ENCODE measurements at regions of chr17 and their contacts with region 1.

Region 1: DNA sequence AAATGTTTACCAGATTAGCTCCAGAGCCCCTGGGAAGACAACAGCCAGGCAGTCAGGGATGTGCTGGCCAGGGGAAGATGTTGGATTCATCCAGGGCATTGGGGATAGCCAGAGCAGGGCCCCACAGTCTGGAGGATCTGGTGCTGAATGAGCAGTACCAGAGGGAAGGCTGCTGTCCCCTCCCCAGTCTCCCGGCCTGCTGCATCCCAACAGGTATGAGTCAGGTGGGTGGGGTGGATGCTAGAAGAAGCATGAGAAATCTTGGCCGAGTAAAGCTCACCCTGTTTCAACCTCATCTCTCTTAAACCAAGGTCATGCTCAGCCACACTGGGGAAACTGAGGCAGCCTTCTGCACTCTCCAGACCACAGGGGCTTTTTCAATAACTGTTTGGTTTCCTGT is 71.9 kb upstream of the SEC14L1 start:
- DNase-seq: no peak
- H3K4me3 Mint-ChIP-seq: no peak overlapping the region
- H3K27ac Mint-ChIP-seq: no peak overlapping the region
- H3K4me1 Mint-ChIP-seq: peaks cover 1% of the 10 kb centered on the region
- H3K27me3 Mint-ChIP-seq: peaks cover 29% of the 10 kb centered on the region

Region 2: DNA sequence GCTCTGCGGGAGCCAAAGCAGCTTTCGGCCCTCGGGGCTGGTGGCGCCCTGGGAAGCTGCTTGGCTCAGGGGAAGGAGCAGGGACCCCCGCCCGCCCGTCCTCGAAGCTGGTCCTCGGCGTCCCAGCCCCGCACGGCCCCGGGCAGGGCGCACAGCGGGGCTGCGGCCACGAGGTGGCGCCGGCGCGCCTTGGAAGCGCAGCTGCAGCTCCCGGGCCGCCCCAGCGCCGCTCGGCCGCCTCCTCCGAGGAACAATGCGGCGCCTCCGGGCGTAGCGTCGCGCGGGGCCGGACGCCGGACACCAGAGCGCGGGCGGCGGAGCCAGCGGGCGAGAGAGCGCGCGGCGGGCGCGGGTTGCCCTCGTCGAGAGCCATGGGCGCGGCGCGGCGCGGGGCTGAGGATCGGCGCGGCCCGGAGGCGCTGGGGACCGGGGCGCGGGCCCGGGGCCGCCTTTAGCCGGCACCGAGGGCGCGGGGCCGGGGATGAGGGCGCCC is 200.7 kb before region 1 on chr17 and contains the start of gene MGAT5B:
- CTCF ChIA-PET with region 1: interaction called, 13 read pairs
- POLR2A ChIA-PET with region 1: no interaction called
- DNase-seq: peak; percentile 72
- H3K4me3 Mint-ChIP-seq: peak within 1 kb of the TSS; percentile 61
- H3K27ac Mint-ChIP-seq: no peak within 1 kb of the TSS
- H3K4me1 Mint-ChIP-seq: peaks cover 8% of the 10 kb centered on the region
- H3K27me3 Mint-ChIP-seq: peaks cover 34% of the 10 kb centered on the region
- total RNA-seq, gene MGAT5B: 0.12 to 0.45 TPM